ENCODE measurements at regions of chr22 and their contacts with region 1.

Region 1: DNA sequence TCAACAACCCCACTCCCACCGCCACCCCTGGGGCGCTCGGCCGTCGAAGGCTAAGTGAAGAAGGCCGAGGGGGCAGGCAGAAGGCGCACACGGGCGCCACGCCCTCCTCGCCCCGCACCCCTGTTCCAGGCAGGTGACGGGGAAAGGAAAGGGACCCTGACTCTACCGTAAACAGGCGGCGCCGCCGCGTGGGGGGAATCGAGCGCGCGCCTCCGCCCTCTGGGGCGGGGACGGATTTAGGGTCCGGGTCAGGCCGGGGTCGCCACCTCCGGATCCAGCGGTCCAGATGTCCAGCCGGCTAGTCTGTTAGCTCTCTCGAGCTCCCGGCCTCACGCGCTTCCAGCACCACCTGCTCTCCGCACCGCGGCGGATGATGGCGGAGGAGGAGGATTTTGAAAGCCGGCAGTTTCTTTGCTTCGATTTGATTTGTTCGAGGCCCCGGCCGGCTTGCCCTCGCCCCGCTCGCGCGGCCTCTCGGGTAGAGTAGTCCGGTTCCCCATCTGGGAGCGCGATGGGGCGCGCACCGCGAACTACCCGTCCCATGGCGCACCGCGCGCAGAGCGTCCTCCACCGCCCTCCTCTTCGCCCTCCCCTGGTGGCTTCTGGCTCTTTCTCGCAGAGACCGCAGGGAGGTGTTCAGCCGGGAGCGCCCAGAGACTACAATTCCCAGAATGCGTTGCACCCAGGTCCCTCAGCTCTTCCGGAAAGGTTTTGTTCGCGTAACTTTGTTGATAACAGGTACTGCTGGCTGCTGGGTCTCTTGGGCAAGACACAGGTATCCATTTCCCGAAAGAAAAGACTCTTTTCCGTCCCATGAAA is at the start of gene RANGAP1:
- DNase-seq: peak; percentile 97 to 98
- ATAC-seq: peak; percentile 97 to 98
- H3K4me3 ChIP-seq: peak within 1 kb of the TSS; percentile 81 to 99 (median 86)
- H3K27ac ChIP-seq: peak within 1 kb of the TSS; percentile 88 to 94 (median 91)
- H3K4me1 ChIP-seq: peaks cover 14% of the 10 kb centered on the region in 2 donors
- H3K27me3 ChIP-seq: no peaks in the 10 kb centered on the region
- CTCF ChIP-seq: peak in 2 of 5 experiments; percentile 33 to 38
- POLR2A ChIP-seq: peak; percentile 91 to 92
- total RNA-seq, gene RANGAP1: 31.4 to 75.2 (median 52.1) TPM

Region 2: DNA sequence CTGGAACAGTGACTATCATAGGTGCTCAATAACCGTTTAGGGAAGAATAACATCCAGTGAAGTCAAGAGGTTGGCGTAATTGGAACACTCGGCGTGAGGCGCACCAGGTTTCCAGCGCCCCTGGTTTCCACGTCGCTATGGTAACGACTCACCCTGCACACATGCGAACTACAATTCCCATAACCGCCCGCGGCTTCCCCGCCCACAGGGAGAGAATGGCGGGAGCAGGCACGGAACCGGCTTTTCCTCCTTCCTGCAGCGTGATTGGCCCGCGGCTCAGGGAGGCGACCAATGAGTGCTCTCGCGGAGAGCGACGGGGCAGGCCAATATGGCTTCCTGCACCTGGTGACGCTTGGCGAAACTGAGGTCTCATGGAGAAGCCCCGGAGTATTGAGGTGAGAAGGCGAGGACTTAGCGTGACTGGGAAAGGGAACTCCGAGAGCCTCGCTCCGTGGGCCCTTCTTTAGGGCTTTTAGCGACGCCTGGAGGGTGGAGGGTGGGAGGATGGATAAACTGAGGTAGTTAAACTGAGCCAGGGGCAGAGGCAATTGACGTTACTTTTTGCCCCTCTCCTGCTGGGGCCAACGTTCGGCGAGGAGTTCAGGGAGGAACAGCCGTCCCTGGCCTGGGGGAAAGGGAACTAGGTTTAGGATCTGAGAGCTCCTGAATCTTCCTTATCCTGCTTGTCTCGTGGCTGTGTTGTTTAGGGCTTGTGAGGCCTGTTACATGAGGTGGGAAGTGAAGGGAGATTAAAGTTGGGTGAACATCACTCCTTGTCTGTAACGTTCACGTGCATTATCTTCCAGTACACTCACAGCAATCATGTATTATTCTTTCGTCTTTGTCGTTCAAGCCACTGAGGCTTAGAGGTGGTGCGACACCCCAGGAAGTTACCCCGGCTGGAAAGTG is 80.8 kb before region 1 on chr22 and contains the start of gene L3MBTL2:
- in situ Hi-C with region 1: no loop called
- intact Hi-C with region 1: loop called (anchors 2 kb)
- DNase-seq: peak; percentile 95 to 97
- ATAC-seq: peak; percentile 99 to 100
- H3K4me3 ChIP-seq: peak within 1 kb of the TSS; percentile 62 to 97 (median 82)
- H3K27ac ChIP-seq: peak within 1 kb of the TSS; percentile 83 to 93 (median 90)
- H3K4me1 ChIP-seq: peaks cover 6 to 10% of the 10 kb centered on the region in 2 donors
- H3K27me3 ChIP-seq: no peaks in the 10 kb centered on the region
- CTCF ChIP-seq: no peak
- POLR2A ChIP-seq: peak in 1 of 2 donors; percentile 43
- total RNA-seq, gene L3MBTL2: 4.8 to 14.4 (median 12.4) TPM

Region 3: DNA sequence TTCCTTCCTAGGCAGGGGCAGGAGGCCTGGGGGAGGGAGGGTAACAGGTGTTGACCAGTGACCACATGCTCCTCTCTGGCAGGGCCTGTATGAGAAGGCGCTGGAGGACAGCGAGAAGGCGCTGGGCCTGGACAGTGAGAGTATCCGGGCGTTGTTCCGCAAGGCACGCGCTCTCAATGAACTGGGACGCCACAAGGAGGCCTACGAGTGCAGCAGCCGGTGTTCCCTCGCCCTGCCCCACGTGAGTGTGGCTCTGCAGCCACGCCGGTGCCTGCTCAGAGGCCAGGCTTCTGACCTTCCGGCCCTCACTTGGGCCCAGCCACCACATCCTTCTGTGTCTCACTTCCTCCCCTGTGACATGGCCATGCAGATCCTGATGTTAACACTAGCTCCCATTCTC is 41.1 kb after region 1 on chr22:
- in situ Hi-C with region 1: no loop called
- intact Hi-C with region 1: loop called (anchors 5 kb)
- DNase-seq: peak; percentile 93 to 97
- ATAC-seq: peak; percentile 95 to 96
- H3K4me3 ChIP-seq: no peak overlapping the region
- H3K27ac ChIP-seq: peak overlapping the region; percentile 88 to 95 (median 92)
- H3K4me1 ChIP-seq: peaks cover 18 to 19% of the 10 kb centered on the region in 2 donors
- H3K27me3 ChIP-seq: no peaks in the 10 kb centered on the region
- CTCF ChIP-seq: peak in 4 of 5 experiments; percentile 41 to 64 (median 52)
- POLR2A ChIP-seq: peak in 1 of 2 donors; percentile 42

Region 4: DNA sequence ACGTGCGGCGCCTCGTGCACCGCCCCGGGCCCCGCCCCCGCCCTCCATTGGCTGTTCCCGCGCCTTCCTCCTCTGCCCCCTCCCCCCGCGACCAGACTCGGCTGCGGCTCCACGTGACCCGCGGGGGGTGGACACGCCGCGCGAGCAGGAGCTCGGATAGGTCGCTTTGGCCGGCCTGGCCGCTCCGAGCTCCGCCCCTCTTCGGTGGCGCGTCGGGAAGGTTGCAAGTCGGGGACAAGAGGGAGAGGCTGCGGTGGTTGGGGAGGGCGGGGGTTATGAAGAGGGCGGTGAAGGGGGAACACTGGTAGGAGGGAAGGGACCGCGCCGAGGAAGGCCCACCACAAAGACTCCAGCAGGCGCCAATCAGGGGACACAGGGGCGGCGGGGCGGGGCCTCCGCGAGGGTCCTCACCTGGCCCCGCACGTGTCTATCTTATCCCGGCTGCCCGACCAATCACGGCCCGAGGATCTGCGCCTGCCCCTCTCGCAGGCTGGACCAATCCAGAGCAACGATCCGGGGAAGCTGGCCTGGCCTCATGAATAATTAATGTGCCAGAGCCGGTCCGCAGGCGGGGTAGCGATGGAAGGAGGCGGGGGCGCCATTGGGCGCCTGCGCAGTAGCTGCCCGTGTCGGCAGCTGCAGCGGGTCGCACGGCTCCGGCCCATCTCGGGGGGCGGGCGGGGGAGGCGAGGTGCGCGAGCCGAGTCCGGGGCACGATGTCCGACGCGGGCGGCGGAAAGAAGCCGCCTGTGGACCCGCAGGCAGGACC is 95.5 kb after region 1 on chr22 and contains the start of gene TEF:
- in situ Hi-C with region 1: no loop called
- intact Hi-C with region 1: loop called (anchors 1 kb)
- DNase-seq: peak; percentile 99 to 100
- ATAC-seq: peak; percentile 75
- H3K4me3 ChIP-seq: peak within 1 kb of the TSS; percentile 73 to 94 (median 86)
- H3K27ac ChIP-seq: peak within 1 kb of the TSS; percentile 96 to 100 (median 100)
- H3K4me1 ChIP-seq: peaks cover 23 to 25% of the 10 kb centered on the region in 2 donors
- H3K27me3 ChIP-seq: no peaks in the 10 kb centered on the region
- CTCF ChIP-seq: no peak
- POLR2A ChIP-seq: peak; percentile 82 to 84
- total RNA-seq, gene TEF: 15.6 to 39.8 (median 19.5) TPM

Region 5: GRCh38 chr22:41543854-41544670 is 258.0 kb after region 1 on chr22 and contains the start of gene POLR3H:
- in situ Hi-C with region 1: loop called in 1 of 4 experiments (anchors 25 kb)
- intact Hi-C with region 1: loop called (anchors 1 kb)
- DNase-seq: peak; percentile 96 to 98
- ATAC-seq: peak; percentile 91
- H3K4me3 ChIP-seq: peak within 1 kb of the TSS; percentile 78 to 90 (median 86)
- H3K27ac ChIP-seq: peak within 1 kb of the TSS; percentile 85 to 95 (median 88)
- H3K4me1 ChIP-seq: peaks cover 17 to 25% of the 10 kb centered on the region in 2 donors
- H3K27me3 ChIP-seq: no peaks in the 10 kb centered on the region
- CTCF ChIP-seq: peak; percentile 4 to 75 (median 49)
- POLR2A ChIP-seq: peak; percentile 66 to 69
- total RNA-seq, gene POLR3H: 5.7 to 11.0 (median 6.9) TPM

Region 6: DNA sequence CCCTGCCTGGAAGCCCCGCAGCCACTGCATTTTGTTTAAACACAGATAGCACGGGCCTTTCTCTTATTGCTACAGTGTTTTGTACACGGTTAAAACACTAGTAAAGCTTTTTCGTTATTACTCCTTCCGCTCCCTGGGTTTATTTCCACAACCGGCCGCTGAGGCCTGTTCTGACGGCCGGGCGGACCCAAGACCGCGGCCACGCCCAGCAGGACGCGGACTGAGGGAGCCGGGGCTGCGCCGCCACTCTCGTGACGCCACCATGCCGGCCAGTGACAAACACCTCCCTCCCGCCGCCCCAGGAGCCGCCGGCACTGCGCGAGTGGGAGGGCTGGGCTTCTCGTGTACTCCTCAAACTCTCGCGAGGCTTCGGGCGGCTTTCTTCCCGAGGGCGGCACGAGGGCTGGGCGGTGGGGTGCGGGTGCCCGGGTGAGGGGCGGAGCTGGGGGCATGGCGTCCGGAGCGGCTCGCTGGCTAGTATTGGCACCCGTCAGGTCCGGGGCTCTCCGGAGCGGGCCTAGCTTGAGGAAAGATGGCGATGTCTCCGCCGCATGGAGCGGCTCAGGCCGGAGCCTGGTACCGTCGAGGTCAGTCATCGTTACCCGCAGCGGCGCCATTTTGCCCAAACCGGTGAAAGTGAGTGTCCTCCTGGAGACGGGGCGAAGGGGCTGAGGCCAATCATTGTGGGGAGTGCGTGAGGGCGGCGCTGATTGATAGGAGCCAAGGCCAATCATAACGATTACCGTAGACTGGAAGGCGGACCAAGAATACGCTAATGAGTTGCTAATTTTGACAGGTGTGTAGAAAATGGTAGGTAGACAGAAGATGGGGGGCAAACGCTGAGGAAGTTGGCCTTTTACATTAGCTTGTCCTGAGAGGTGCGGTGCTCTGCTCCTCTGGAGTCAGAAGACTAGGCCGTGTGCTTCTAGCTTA is 793.6 kb after region 1 on chr22 and contains the start of gene SMDT1:
- in situ Hi-C with region 1: no loop called
- intact Hi-C with region 1: loop called (anchors 10 kb)
- DNase-seq: peak; percentile 99
- ATAC-seq: peak; percentile 92 to 94
- H3K4me3 ChIP-seq: peak within 1 kb of the TSS; percentile 69 to 89 (median 86)
- H3K27ac ChIP-seq: peak within 1 kb of the TSS; percentile 95 to 100 (median 100)
- H3K4me1 ChIP-seq: peaks cover 30 to 37% of the 10 kb centered on the region in 2 donors
- H3K27me3 ChIP-seq: no peaks in the 10 kb centered on the region
- CTCF ChIP-seq: peak in 1 of 5 experiments; percentile 26
- POLR2A ChIP-seq: peak; percentile 97
- total RNA-seq, gene SMDT1: 7.9 to 14.6 (median 9.8) TPM

Measured in gastrocnemius medialis (tissue), 4 donors.